ENCODE measurements at regions of chr6 and their contacts with region 1.

Region 1: GRCh38 chr6:158026054-158026900 is 44.6 kb downstream of the SYNJ2 start:
- DNase-seq: peak; percentile 91
- H3K4me3 Mint-ChIP-seq: peak overlapping the region; percentile 81
- H3K27ac Mint-ChIP-seq: peak overlapping the region; percentile 99
- H3K4me1 Mint-ChIP-seq: peaks cover 36% of the 10 kb centered on the region
- H3K27me3 Mint-ChIP-seq: no peaks in the 10 kb centered on the region

Region 2: DNA sequence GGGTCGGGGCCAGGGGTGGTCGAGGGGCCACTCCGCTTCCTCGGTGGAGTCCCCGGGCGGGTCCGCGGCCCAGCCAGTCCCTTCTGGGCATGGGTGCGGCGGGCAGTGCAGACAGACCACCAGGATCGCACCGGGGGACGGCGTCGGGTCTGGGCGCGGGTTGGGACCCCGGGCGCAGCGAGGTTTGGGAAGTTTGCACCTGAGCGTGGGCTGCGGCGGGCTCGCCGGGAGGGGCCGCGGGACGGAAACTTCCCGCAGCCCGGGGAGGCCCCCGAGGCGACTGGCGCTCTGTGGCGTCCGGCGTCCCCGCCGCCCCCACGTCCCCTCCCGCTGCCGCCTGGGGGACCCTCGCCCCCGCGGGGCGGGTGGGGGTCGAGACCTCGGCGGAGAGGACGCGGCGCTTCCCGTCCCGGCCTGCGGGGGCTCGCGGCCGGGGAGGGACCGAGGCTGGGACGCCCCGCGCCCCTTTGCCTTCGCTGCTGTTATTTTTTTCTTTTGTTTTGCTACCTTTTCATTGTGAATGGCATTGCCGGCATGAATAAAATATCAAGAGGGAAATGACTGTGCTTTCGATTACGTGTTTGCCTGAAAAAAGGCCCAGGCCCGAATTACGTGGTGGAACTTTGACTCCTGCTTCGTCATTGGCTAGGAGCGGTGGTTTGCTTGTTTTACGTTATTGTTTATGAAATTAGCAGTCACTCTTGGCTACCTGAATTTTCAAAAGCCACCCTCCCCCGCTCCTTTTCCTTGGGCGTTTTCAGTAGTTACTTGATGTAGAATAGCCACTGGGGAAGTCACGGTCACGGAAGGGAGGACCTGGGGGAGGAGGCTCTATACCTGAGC is 202.5 kb before region 1 on chr6:
- CTCF ChIA-PET with region 1: interaction called, 3 read pairs
- intact Hi-C with region 1: loop called (anchors 1 kb)
- DNase-seq: peak; percentile 96
- H3K4me3 Mint-ChIP-seq: peak overlapping the region; percentile 80
- H3K27ac Mint-ChIP-seq: peak overlapping the region; percentile 96
- H3K4me1 Mint-ChIP-seq: peaks cover 42% of the 10 kb centered on the region
- H3K27me3 Mint-ChIP-seq: peaks cover 4% of the 10 kb centered on the region

Region 3: DNA sequence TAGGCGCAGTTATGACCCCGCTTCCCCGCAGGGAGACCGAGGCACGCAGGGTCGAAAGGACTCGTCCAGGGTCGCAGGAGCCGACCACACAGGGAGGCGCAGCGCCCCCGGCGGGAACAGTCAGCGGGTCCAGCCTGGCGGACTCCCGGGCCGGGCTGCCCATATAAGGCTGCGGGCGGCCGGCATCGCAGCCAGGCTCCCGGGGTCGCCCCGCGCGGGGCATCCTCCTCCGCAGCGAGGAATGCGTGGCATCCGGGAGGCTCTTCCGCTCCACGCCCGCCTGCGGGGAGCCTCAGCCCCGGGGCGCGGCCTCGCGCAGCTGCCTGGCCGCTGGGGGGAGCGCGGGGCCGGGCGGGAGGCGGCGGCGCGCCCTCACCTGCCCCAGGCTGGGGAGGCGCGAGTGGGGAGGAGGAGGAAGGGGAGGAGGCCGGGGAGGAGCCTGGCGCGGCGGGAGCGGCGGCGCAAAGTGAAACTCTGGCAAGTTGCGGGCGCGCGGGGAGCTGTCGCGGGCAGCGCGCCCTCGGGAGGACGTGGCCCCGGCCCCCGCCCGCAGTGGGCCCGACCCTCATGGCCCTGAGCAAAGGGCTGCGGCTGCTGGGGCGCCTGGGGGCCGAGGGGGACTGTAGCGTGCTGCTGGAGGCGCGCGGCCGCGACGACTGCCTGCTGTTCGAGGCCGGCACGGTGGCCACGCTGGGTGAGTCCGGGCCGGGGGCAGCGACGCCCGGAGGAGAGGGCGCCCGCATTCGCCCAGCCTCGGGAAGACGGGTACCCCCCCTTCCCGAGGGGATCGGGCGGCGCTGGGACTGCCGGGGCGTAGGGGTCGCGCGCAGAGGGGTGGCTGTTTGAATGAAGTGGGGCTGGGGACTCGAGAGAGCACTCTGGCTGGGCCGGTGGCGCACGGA is 44.6 kb before region 1 on chr6 and contains the start of gene SYNJ2:
- CTCF ChIA-PET with region 1: interaction called, 39 read pairs
- intact Hi-C with region 1: loop called (anchors 1 kb)
- DNase-seq: peak; percentile 88
- H3K4me3 Mint-ChIP-seq: peak within 1 kb of the TSS; percentile 88
- H3K27ac Mint-ChIP-seq: peak within 1 kb of the TSS; percentile 83
- H3K4me1 Mint-ChIP-seq: peaks cover 34% of the 10 kb centered on the region
- H3K27me3 Mint-ChIP-seq: no peaks in the 10 kb centered on the region
- total RNA-seq, gene SYNJ2: 42.4 to 42.7 TPM

Region 4: DNA sequence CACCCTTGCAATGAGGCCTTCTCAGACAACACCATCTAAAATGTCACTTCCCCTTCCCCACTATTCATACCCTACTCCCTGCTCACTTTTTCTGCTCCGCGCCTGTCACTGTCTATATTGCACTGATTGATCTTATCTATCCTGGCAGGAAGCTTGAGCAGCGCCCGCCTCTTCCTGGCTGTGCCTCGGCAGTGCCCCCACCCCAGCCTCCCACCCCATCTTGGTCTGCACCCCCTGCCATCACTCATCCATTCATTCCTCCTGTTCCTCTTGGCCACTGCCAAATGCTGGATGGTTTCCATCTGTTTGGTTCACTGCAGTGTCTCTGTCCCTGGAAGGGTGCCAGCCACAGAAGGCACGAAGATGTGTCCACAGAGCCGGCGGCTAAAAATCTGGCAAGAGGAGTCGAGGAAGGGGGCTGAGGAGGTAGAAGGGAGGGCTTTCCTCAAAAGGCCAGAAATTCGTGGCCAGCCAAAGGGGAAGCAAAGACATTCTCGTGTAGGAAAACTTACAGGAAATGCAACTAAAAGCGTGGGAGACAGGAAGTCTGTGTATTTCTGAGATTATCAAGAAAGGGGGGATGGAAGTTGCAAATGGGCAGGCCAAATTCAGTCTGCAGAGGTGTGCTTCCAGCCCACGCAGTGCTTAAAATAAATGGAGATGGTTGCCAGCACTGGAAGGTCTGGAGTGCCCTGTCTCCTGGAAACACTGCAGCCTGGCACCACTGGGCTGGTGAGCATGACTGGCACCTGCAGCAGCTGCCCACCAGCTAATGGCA is 17.0 kb before region 1 on chr6:
- CTCF ChIA-PET with region 1: interaction called, 34 read pairs
- intact Hi-C with region 1: loop called (anchors 2 kb)
- DNase-seq: peak; percentile 51
- H3K4me3 Mint-ChIP-seq: peak overlapping the region; percentile 42
- H3K27ac Mint-ChIP-seq: peak overlapping the region; percentile 77
- H3K4me1 Mint-ChIP-seq: peaks cover 80% of the 10 kb centered on the region
- H3K27me3 Mint-ChIP-seq: no peaks in the 10 kb centered on the region

Region 5: DNA sequence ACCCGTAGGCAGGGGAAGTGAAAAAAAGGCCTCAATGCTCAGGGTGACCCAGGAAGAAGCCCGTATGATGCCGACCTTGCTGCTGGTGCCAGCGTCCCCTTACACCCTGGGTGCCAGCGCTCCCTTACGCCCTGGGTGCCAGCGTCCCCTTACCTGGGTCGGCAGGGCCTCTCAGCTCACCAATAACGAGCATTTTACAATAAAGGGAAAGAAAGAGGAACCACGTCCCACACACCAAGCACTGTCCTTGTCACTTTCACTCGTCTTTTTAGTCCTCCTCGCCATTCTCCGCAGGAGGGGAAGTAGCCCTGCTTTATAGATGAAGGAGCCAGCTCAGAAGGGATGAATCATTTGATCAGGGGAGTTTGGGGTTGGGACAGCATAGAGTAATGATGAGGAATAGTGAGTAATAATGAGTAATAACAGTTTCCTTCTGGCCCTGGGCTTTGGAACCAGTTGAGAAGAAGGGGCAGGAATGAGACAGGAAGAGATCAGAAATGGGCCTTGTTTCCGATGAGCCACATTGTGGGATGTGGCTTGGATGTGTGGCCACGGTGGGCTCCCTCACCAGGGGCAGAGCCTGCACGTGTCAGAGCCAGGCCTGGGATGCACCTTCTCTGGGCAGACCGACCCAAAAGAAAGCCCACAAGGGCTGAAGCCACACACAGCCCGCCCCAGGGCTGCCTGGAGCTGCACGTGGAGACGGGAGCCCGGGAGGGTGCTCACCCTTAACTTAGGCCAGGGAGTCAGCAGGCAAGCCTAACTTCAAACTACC is 31.1 kb after region 1 on chr6:
- CTCF ChIA-PET with region 1: interaction called, 10 read pairs
- intact Hi-C with region 1: loop called (anchors 1 kb)
- DNase-seq: peak; percentile 77
- H3K4me3 Mint-ChIP-seq: no peak overlapping the region
- H3K27ac Mint-ChIP-seq: peak overlapping the region; percentile 25
- H3K4me1 Mint-ChIP-seq: peaks cover 54% of the 10 kb centered on the region
- H3K27me3 Mint-ChIP-seq: no peaks in the 10 kb centered on the region

Region 6: DNA sequence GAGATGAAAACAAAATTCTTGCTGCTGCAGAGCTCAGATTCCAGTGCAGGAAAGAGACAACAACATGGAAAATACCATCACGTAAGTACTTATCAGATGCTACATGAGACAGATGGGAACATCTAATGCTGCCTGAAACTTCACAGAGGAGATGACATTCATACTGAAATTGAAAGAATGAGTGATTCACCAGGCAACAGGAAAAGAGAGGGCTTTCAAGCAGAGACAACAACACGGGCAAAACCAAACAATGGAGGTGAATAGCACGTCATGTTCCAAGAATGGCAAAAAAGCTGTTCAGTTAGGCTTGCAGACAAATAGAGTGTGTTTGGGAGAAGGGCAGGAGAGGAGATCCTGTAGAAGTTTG is 181.1 kb after region 1 on chr6:
- CTCF ChIA-PET with region 1: no interaction called
- intact Hi-C with region 1: loop called (anchors 1 kb)
- DNase-seq: peak; percentile 66
- H3K4me3 Mint-ChIP-seq: peak overlapping the region; percentile 5
- H3K27ac Mint-ChIP-seq: peak overlapping the region; percentile 78
- H3K4me1 Mint-ChIP-seq: peaks cover 34% of the 10 kb centered on the region
- H3K27me3 Mint-ChIP-seq: no peaks in the 10 kb centered on the region